ENCODE measurements at regions of chr2 and their contacts with region 1.

Region 1: GRCh38 chr2:27960237-27960912 is 69.8 kb downstream of the BABAM2 start:
- DNase-seq: peak; percentile 62
- H3K4me3 Mint-ChIP-seq: peak overlapping the region; percentile 3
- H3K27ac Mint-ChIP-seq: peak overlapping the region; percentile 12
- H3K4me1 Mint-ChIP-seq: peaks cover 54% of the 10 kb centered on the region
- H3K27me3 Mint-ChIP-seq: no peaks in the 10 kb centered on the region
- CTCF ChIP-seq: no peak

Region 2: GRCh38 chr2:26412091-26412673 is 1548.2 kb before region 1 on chr2:
- CTCF ChIA-PET with region 1: no interaction called
- POLR2A ChIA-PET with region 1: no interaction called
- intact Hi-C with region 1: no loop called
- DNase-seq: no peak
- H3K4me3 Mint-ChIP-seq: no peak overlapping the region
- H3K27ac Mint-ChIP-seq: no peak overlapping the region
- H3K4me1 Mint-ChIP-seq: no peaks in the 10 kb centered on the region
- H3K27me3 Mint-ChIP-seq: no peaks in the 10 kb centered on the region
- CTCF ChIP-seq: no peak

Region 3: DNA sequence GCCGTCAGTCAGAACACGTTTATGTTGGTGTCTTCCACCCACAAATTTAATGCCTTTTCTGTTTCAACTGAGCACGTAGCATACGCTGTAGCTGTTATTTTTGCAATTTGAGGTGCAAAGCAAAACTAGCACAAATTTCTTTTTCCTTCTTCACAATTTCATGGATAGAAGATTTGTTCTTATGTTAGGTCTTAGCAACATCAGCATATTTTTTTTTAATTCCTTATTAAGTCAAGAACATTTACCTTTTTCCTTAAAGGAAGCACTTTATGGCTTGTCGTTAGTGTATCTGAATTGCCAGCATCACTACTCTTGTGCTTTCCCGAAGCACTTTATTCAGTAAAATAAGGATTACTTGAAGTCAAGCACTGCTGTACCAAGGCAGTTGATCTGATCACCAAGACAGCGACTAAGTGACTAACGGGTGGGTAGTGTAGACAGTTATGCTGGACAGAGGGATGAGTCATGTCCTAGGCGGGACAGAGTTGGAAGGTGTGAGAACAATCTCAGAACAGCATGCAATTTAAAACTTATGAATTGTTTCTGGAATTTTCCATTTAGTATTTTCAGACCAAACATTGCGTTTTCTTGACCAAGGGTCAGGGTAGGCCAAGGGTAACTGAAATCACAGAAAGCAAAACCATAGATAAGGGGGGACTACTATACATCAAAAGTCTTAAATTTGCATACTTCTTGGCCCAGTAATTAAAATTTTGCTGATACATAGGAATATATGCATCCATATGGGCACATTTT is 56.5 kb before region 1 on chr2:
- CTCF ChIA-PET with region 1: no interaction called
- POLR2A ChIA-PET with region 1: no interaction called
- intact Hi-C with region 1: no loop called
- DNase-seq: peak; percentile 73
- H3K4me3 Mint-ChIP-seq: no peak overlapping the region
- H3K27ac Mint-ChIP-seq: peak overlapping the region; percentile 3
- H3K4me1 Mint-ChIP-seq: peaks cover 44% of the 10 kb centered on the region
- H3K27me3 Mint-ChIP-seq: no peaks in the 10 kb centered on the region
- CTCF ChIP-seq: no peak

Region 4: GRCh38 chr2:27980242-27980641 is 19.9 kb after region 1 on chr2:
- CTCF ChIA-PET with region 1: no interaction called
- POLR2A ChIA-PET with region 1: interaction called, 8 read pairs
- intact Hi-C with region 1: loop called (anchors 2 kb)
- DNase-seq: no peak
- H3K4me3 Mint-ChIP-seq: no peak overlapping the region
- H3K27ac Mint-ChIP-seq: peak overlapping the region; percentile 14
- H3K4me1 Mint-ChIP-seq: peaks cover 33% of the 10 kb centered on the region
- H3K27me3 Mint-ChIP-seq: no peaks in the 10 kb centered on the region
- CTCF ChIP-seq: no peak

Region 5: GRCh38 chr2:28068088-28068487 is 107.7 kb after region 1 on chr2:
- CTCF ChIA-PET with region 1: no interaction called
- POLR2A ChIA-PET with region 1: no interaction called
- intact Hi-C with region 1: no loop called
- DNase-seq: peak; percentile 43
- H3K4me3 Mint-ChIP-seq: no peak overlapping the region
- H3K27ac Mint-ChIP-seq: peak overlapping the region; percentile 39
- H3K4me1 Mint-ChIP-seq: peaks cover 19% of the 10 kb centered on the region
- H3K27me3 Mint-ChIP-seq: no peaks in the 10 kb centered on the region
- CTCF ChIP-seq: no peak